ENCODE measurements at regions of chr2 and their contacts with region 1.

Region 1: GRCh38 chr2:9142551-9143263 is 63.9 kb upstream of the ASAP2 start:
- DNase-seq: peak; percentile 86
- H3K27ac ChIP-seq: peak overlapping the region; percentile 80
- CTCF ChIP-seq: peak; percentile 96

Region 2: GRCh38 chr2:9333591-9334171 is 191.0 kb after region 1 on chr2:
- CTCF ChIA-PET with region 1: interaction called, 12 read pairs
- POLR2A ChIA-PET with region 1: no interaction called
- DNase-seq: peak; percentile 60
- H3K27ac ChIP-seq: no peak overlapping the region; the same call in 1 of the 2 replicates
- CTCF ChIP-seq: peak; percentile 68